ENCODE measurements at regions of chr12 and their contacts with region 1.

Region 1: DNA sequence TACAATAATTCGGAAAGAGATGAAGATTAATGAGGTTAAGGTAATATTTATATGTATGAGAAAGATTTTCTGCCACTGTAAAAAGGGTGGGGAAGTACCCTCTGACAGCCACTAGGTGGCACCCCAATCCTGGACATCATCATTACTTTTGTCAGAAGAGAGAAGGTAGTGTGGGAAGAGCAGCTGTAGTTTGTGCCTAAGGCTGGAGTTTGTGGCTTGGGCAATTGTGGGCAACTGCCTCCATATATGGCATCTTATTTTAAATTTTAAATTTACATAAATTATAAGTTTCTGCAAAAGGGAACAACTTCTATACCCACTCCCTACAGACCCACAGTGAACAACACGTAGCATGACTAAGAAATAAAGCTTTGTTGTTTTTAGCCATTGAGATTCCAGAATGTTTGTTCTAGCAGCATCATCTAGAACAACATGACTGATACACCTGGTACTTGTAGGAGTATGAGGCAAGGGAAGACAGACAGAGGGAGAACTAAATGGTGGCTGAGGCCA is 34.4 kb upstream of the SYCP3 start:
- DNase-seq: peak; percentile 79
- CTCF ChIP-seq: peak; percentile 75

Region 2: GRCh38 chr12:101407436-101408345 is 366.0 kb before region 1 on chr12 and contains the start of gene ARL1:
- in situ Hi-C with region 1: loop called (anchors 25 kb)
- DNase-seq: peak; percentile 88
- CTCF ChIP-seq: no peak

Region 3: GRCh38 chr12:101850199-101850598 is 76.5 kb after region 1 on chr12:
- in situ Hi-C with region 1: no loop called
- DNase-seq: no peak
- CTCF ChIP-seq: no peak

Region 4: GRCh38 chr12:101909646-101910045 is 135.9 kb after region 1 on chr12:
- in situ Hi-C with region 1: loop called (anchors 10 kb)
- DNase-seq: no peak
- CTCF ChIP-seq: no peak